ENCODE measurements at regions of chr11 and their contacts with region 1.

Region 1: DNA sequence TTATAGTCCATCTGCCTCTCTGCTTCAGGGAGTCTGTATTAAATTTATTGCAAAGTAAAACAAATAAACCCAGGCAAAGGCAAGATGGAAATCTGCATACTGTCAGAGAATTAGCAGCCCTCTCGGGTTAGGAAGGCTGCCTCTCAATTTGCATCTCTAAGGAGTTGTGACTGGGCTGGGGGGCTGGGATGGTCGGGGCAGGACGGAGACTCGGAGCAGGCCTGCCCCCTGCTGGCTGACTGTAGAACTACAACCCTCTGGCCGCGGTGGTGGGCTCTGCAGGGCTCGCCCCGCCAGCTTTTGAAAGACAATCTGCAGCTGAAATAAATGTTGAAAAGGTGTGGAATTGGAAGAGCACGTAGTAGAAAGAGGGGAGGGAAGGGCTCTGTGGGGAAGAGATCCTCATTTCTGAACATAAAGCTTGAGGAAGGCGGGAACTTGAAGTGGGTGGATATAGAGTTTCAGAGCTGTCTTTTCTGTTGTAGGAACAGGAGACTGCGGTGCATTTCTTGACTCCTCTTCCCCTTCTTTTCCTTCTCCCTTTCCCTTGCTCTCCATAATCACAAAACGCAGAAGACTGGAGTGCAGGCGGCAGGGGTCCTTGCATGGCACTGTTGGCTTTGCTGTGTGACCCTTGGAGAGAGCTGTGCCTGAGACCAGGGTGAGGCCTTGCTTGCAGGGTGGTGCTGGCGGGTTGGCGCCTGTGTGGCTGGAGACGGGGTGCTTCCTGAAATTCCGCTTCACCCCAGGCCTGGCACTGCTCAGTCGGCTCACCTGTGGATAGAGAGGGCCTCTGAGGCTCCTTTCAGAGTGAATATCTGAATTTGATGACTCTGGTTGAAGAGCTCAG is 22.6 kb upstream of the PKNOX2 start:
- DNase-seq: peak in 1 of 2 experiments; percentile 97
- H3K4me3 ChIP-seq: peak overlapping the region in 1 of 4 experiments; percentile 47; a peak in 2 of 8 replicates
- H3K27ac ChIP-seq: no peak overlapping the region
- H3K4me1 ChIP-seq: peaks cover 10 to 32% (median 25%) of the 10 kb centered on the region in 4 experiments
- H3K27me3 ChIP-seq: peaks cover 5 to 46% (median 35%) of the 10 kb centered on the region in 4 experiments
- CTCF ChIP-seq: peak; percentile 87 to 95 (median 89)
- EP300 ChIP-seq: no peak
- POLR2A ChIP-seq: no peak
- RAD21 ChIP-seq: peak; percentile 83 to 88

Region 2: DNA sequence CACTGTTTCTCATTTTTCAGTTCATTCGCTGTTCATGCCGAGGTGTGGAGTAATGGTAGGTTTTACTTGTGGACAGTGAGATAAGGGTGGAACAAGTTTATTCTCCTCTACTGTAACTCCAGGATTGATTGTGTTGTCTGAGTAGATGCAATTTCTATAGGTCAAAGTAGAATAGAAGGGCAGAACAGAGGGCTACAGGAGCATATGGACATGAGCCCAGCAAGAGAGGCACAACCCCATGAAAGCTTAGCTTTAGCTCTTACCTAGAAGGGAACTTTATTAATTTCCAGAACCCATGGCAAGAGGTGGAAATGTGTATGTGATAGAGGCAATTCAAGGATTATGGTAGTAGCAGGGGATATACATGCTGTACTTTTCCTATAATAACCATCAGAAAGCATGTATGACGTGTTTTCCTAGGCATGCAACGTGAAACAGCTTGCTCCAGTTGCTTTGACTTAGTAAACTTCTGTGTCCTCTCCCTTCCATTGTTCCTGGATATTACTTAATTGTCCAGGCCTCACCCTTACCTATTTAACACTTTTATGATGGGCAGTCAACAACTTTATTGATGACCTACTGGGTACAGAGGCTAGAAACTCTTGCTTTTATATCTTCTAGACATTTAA is 92.6 kb before region 1 on chr11:
- CTCF ChIA-PET with region 1: no interaction called
- POLR2A ChIA-PET with region 1: no interaction called
- DNase-seq: no peak
- H3K4me3 ChIP-seq: no peak overlapping the region
- H3K27ac ChIP-seq: no peak overlapping the region
- H3K4me1 ChIP-seq: no peaks in the 10 kb centered on the region
- H3K27me3 ChIP-seq: no peaks in the 10 kb centered on the region
- CTCF ChIP-seq: no peak
- EP300 ChIP-seq: no peak
- POLR2A ChIP-seq: no peak
- RAD21 ChIP-seq: no peak

Region 3: DNA sequence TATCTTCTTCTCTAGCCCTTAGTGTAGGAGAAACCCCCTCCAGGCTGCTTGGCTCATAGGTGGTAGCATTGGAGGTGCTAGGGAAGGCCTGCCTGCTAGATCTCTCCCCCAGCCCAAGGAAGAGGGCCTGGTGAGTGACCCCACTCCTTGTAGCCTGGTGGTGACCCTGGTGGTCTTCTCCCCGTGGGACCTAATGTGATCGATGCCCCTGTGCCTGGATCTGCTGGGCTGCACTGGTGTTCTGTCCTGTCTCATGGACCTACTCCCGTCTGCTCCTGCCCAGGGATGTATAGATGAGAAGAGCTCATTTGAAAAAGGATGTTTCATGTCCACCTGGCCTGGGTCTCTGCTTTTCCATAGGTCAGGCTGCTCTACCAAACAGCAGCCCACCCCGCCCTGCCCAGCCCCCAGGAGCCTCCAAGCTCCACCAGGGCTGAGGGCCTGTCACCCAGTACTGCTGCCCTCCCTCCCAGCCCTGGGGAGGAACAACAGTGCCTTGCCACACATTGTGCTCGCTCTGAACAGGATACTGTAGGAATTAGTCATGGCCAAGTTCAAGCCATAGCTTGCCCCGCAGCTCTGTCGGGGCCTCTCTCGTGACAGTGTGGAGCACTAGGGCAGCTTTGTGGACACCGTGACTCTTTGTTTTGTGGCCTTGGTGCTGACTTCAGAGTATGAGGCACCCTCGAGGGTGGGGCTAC is 59.1 kb before region 1 on chr11:
- CTCF ChIA-PET with region 1: interaction called, 148 read pairs
- POLR2A ChIA-PET with region 1: no interaction called
- DNase-seq: no peak
- H3K4me3 ChIP-seq: no peak overlapping the region
- H3K27ac ChIP-seq: no peak overlapping the region
- H3K4me1 ChIP-seq: peaks cover 0 to 3% (median 0%) of the 10 kb centered on the region in 4 experiments; a peak in 2 of 7 replicates
- H3K27me3 ChIP-seq: no peaks in the 10 kb centered on the region; a peak in 1 of 7 replicates
- CTCF ChIP-seq: no peak
- EP300 ChIP-seq: no peak
- POLR2A ChIP-seq: no peak
- RAD21 ChIP-seq: no peak

Region 4: DNA sequence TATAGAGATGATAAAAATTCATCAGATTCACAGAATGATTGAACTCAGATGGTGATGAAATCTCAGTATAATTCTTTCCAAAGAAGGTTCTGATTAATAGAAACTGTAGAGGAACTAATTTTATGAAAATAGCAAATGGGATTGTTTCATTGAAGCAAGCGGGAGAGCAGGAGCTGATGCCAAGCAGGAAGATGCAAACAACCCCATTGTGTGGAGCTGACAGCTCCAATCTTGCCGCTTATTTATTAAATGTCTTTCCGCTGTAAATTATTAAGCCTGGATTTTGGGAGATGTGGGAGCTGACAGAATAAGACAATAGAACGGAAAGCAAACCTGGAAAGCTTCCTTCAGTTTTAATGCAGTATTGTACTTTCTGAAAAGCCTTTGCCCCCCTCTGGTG is 24.5 kb before region 1 on chr11:
- CTCF ChIA-PET with region 1: interaction called, 61 read pairs
- POLR2A ChIA-PET with region 1: interaction called, 3 read pairs
- DNase-seq: no peak
- H3K4me3 ChIP-seq: no peak overlapping the region
- H3K27ac ChIP-seq: no peak overlapping the region
- H3K4me1 ChIP-seq: no peaks in the 10 kb centered on the region
- H3K27me3 ChIP-seq: peaks cover 0 to 6% (median 1%) of the 10 kb centered on the region in 4 experiments; a peak in 4 of 7 replicates
- CTCF ChIP-seq: no peak
- EP300 ChIP-seq: no peak
- POLR2A ChIP-seq: no peak
- RAD21 ChIP-seq: no peak

Region 5: DNA sequence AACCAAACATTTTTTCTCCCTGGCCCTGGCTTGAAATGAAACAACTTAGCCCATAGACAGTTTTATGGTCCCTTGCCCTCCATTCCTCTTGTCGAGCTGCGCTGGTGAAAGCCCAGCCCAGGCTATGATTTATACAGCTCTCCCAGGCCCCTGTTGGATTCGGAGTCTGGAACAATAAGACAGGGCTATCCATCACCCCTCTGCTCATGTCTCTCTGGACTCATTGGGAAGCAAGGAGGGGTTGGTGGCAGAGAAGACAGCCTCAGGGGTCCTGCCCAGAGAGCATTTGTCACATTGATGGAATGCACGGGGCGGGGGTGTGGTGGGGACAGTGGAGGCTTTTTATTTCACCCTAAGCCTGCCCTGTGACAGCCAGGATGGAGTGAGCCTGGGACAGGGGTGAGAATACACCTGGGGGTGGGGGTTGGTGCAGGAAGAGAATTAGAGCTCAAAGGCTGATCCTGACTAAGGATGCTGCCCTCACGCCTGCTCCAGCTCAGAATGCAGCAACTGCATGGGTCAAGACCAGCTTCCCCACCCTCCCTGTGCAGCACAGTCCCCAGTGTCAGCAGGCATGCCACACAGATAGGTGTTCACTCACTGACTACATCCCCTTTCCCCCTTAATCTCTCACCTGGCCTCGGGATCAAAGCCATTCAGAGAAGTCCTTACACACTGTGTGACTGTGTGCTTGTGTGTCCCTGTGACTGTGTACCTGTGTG is 12.6 kb after region 1 on chr11:
- CTCF ChIA-PET with region 1: interaction called, 42 read pairs
- POLR2A ChIA-PET with region 1: no interaction called
- DNase-seq: no peak
- H3K4me3 ChIP-seq: no peak overlapping the region
- H3K27ac ChIP-seq: no peak overlapping the region
- H3K4me1 ChIP-seq: no peaks in the 10 kb centered on the region
- H3K27me3 ChIP-seq: no peaks in the 10 kb centered on the region; a peak in 1 of 7 replicates
- CTCF ChIP-seq: no peak
- EP300 ChIP-seq: no peak
- POLR2A ChIP-seq: no peak
- RAD21 ChIP-seq: no peak

Region 6: GRCh38 chr11:125176866-125177265 is 35.0 kb after region 1 on chr11:
- CTCF ChIA-PET with region 1: interaction called, 19 read pairs
- POLR2A ChIA-PET with region 1: no interaction called
- DNase-seq: no peak
- H3K4me3 ChIP-seq: no peak overlapping the region
- H3K27ac ChIP-seq: no peak overlapping the region
- H3K4me1 ChIP-seq: peaks cover 1 to 25% (median 6%) of the 10 kb centered on the region in 4 experiments; a peak in 4 of 7 replicates
- H3K27me3 ChIP-seq: no peaks in the 10 kb centered on the region; a peak in 1 of 7 replicates
- CTCF ChIP-seq: no peak
- EP300 ChIP-seq: no peak
- POLR2A ChIP-seq: no peak
- RAD21 ChIP-seq: no peak

Region 7: GRCh38 chr11:125263268-125263790 is 121.4 kb after region 1 on chr11:
- CTCF ChIA-PET with region 1: interaction called, 12 read pairs
- POLR2A ChIA-PET with region 1: no interaction called
- DNase-seq: peak; percentile 87 to 94
- H3K4me3 ChIP-seq: peak overlapping the region in 3 of 4 experiments; percentile 14 to 47 (median 23); a peak in 5 of 8 replicates
- H3K27ac ChIP-seq: 0 out of 2 replicates have a peak overlapping the region, but pooled peaks have one; percentile 30
- H3K4me1 ChIP-seq: peaks cover 11 to 30% (median 23%) of the 10 kb centered on the region in 4 experiments
- H3K27me3 ChIP-seq: peaks cover 0 to 19% (median 14%) of the 10 kb centered on the region in 4 experiments; a peak in 5 of 7 replicates
- CTCF ChIP-seq: no peak
- EP300 ChIP-seq: peak; percentile 54 to 95; a peak in 2 of 3 replicates
- POLR2A ChIP-seq: no peak
- RAD21 ChIP-seq: peak in 1 of 2 experiments; percentile 15; a peak in 2 of 4 replicates

Region 8: DNA sequence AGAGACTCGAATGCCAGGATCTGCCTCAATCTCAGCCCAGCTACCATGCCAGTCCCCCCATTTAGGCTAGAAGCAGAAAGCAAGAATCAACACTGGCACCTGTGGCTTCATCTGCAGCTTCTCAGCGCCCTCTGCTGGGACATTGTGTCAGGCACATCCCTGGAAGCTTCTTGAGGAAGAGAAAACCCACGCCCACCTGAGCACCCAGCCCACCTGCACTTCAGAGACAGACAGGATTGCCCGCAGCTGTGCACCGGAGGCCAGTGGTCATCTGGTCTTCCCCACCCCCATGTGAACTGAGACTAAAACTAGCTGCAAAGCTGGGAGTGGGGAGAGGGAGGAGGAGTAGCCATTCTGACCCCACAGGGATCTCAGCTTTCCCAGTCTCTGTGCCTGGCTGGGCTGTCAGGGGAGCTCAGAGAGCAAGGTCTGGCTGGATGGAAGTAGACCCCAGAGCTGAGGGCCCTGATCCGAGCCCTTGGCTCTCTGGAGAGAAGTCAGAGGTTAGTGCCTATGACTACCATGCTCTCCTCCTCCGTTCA is 287.3 kb after region 1 on chr11:
- CTCF ChIA-PET with region 1: interaction called, 17 read pairs
- POLR2A ChIA-PET with region 1: no interaction called
- DNase-seq: peak; percentile 58 to 90
- H3K4me3 ChIP-seq: no peak overlapping the region; a peak in 1 of 8 replicates
- H3K27ac ChIP-seq: no peak overlapping the region
- H3K4me1 ChIP-seq: peaks cover 0 to 12% (median 9%) of the 10 kb centered on the region in 4 experiments; a peak in 5 of 7 replicates
- H3K27me3 ChIP-seq: no peaks in the 10 kb centered on the region
- CTCF ChIP-seq: peak; percentile 82 to 96 (median 90)
- EP300 ChIP-seq: no peak
- POLR2A ChIP-seq: no peak
- RAD21 ChIP-seq: peak; percentile 94 to 95

Region 9: DNA sequence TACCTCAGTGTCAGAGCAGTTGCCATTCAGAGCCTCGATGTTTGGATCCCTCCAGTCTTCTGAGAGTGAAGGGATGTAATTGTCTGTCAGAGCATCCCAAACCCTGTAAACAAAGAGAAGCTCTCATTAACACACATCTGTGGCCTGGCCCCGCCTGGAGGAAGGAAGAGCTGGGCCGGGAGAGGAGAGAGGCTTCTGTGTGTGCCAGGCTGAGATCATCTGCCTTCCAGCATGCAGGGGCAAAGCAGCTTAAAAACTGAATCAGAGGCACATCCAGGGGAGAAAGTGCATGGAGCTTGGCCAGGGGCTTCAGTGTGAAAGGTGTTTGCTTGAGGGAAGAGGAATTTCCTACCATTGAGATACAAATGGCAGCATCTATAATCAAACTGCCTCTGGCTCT is 339.6 kb after region 1 on chr11:
- CTCF ChIA-PET with region 1: no interaction called
- POLR2A ChIA-PET with region 1: no interaction called
- DNase-seq: no peak
- H3K4me3 ChIP-seq: no peak overlapping the region
- H3K27ac ChIP-seq: no peak overlapping the region
- H3K4me1 ChIP-seq: peaks cover 2 to 9% (median 6%) of the 10 kb centered on the region in 4 experiments; a peak in 6 of 7 replicates
- H3K27me3 ChIP-seq: no peaks in the 10 kb centered on the region
- CTCF ChIP-seq: no peak
- EP300 ChIP-seq: no peak
- POLR2A ChIP-seq: no peak
- RAD21 ChIP-seq: no peak

Measured in H1 (cell line).